OCI-LY7 (cell line): ENCODE measurements at regions of chr5 and their contacts with region 1.

Region 1: GRCh38 chr5:59174248-59174844 is 591.5 kb downstream of the RAB3C start:
- DNase-seq: peak; percentile 42
- H3K4me3 ChIP-seq: no peak overlapping the region
- H3K27ac ChIP-seq: no peak overlapping the region
- H3K4me1 ChIP-seq: no peaks in the 10 kb centered on the region
- CTCF ChIP-seq: peak; percentile 90

Region 2: DNA sequence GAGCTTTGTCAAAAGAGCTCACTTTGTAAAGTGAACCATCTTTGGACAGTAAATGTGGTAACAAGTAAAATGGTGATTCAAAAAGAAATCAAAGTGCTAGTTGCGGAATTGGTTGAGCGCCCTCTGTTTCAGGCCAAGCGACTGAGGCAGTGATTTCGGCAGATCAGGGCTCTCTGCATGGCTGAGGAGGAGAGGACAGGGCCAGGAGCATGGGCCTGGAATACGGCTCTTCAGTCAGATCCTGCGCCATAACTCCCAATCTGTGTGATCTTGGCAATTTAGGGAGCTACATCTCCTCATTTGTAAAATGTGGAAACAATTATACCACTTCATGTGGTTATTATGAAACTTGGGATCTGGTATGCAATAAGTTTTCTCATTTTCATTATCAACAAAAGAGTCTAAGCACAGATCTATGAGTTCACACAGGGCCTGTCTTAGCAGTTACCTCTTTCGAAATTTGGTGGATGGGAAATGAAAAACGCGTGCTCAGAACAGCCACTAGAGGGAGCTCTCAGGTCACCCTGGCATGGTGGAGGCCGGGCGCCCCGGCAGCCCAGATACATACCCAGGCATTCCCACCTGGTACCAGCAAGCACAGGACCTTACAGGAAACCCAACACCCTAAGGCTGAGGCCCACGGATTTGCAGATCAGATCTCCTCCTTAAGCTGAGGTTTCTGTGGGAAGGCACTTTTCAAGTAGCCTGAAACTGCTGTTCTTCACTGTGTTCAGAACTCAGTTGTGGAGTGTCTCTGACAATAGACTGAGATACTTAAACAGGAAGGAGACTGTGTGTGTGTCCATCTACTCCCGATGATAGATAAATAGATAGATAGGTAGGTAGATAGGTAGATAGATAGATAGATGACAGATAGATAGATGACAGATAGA is 287.8 kb before region 1 on chr5:
- CTCF ChIA-PET with region 1: no interaction called
- POLR2A ChIA-PET with region 1: no interaction called
- intact Hi-C with region 1: loop called (anchors 5 kb)
- DNase-seq: peak; percentile 57
- H3K4me3 ChIP-seq: no peak overlapping the region
- H3K27ac ChIP-seq: no peak overlapping the region
- H3K4me1 ChIP-seq: no peaks in the 10 kb centered on the region
- CTCF ChIP-seq: peak; percentile 94

Region 3: GRCh38 chr5:59034498-59035186 is 139.7 kb before region 1 on chr5:
- CTCF ChIA-PET with region 1: no interaction called
- POLR2A ChIA-PET with region 1: interaction called, 4 read pairs
- intact Hi-C with region 1: loop called (anchors 5 kb)
- DNase-seq: peak; percentile 4
- H3K4me3 ChIP-seq: no peak overlapping the region
- H3K27ac ChIP-seq: no peak overlapping the region
- H3K4me1 ChIP-seq: no peaks in the 10 kb centered on the region
- CTCF ChIP-seq: peak; percentile 75